Tibial artery (tissue), 4 donors: ENCODE measurements at regions of chr17 and their contacts with region 1.

Region 1: GRCh38 chr17:48016112-48016511 is 21.5 kb downstream of the COPZ2 start:
- DNase-seq: no peak
- H3K4me3 ChIP-seq: no peak overlapping the region
- H3K27ac ChIP-seq: no peak overlapping the region
- H3K4me1 ChIP-seq: peaks cover 0 to 15% (median 11%) of the 10 kb centered on the region in 4 donors
- H3K27me3 ChIP-seq: peaks cover 0 to 53% of the 10 kb centered on the region in 2 donors
- CTCF ChIP-seq: no peak

Region 2: DNA sequence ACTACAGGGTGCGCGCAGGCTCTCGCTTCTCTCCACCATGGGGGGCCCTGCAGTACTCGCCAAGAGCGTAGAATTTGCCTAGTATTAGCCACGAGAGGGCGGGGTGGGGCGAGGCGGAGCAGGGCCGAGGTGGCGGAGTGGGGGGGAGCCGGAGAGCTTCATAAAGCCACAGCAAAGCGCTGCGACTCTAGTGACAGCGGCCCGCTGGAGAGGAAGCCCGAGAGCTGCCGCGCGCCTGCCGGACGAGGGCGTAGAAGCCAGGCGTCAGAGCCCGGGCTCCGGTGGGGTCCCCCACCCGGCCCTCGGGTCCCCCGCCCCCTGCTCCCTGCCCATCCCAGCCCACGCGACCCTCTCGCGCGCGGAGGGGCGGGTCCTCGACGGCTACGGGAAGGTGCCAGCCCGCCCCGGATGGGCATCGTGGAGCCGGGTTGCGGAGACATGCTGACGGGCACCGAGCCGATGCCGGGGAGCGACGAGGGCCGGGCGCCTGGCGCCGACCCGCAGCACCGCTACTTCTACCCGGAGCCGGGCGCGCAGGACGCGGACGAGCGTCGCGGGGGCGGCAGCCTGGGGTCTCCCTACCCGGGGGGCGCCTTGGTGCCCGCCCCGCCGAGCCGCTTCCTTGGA is 283.0 kb before region 1 on chr17 and contains the start of gene TBX21:
- intact Hi-C with region 1: no loop called
- DNase-seq: peak; percentile 46 to 69
- H3K4me3 ChIP-seq: peak within 1 kb of the TSS; percentile 20 to 50
- H3K27ac ChIP-seq: no peak within 1 kb of the TSS
- H3K4me1 ChIP-seq: peaks cover 0 to 17% (median 12%) of the 10 kb centered on the region in 4 donors
- H3K27me3 ChIP-seq: peaks cover 0 to 68% of the 10 kb centered on the region in 2 donors
- CTCF ChIP-seq: no peak

Region 3: DNA sequence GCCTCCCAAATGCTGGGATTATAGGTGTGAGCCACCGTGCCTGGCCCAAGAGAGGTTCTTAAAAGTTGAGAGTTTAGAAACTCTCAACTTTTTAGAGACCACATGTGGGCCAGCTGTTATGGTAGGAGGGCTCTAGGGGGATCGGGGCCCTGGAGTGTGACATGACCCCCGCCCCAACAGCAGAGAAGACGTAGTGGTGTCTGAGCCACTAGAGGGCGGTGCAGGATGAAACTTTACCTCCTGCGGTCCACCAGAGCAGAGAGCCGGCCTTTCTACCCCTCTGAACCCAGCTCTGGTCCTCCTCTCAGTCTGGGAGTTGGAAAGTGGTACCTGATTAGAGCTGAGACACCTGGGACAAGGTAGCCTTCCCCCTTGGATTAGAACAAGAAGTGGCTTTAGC is 37.8 kb before region 1 on chr17:
- intact Hi-C with region 1: loop called (anchors 5 kb)
- DNase-seq: no peak
- H3K4me3 ChIP-seq: no peak overlapping the region
- H3K27ac ChIP-seq: no peak overlapping the region
- H3K4me1 ChIP-seq: no peaks in the 10 kb centered on the region
- H3K27me3 ChIP-seq: no peaks in the 10 kb centered on the region
- CTCF ChIP-seq: peak; percentile 59 to 60